SK-N-SH (cell line): ENCODE measurements at regions of chr10 and their contacts with region 1.

Region 1: GRCh38 chr10:80662577-80663261 is 125.0 kb downstream of the SH2D4B start:
- DNase-seq: peak; percentile 77
- H3K4me3 ChIP-seq: peak overlapping the region; percentile 24 to 46; a peak in 3 of 4 replicates
- H3K27ac ChIP-seq: no peak overlapping the region
- H3K4me1 ChIP-seq: peaks cover 0 to 2% of the 10 kb centered on the region in 2 experiments; a peak in 1 of 4 replicates
- H3K27me3 ChIP-seq: no peaks in the 10 kb centered on the region
- CTCF ChIP-seq: peak; percentile 88
- EP300 ChIP-seq: no peak
- RAD21 ChIP-seq: peak; percentile 70

Region 2: GRCh38 chr10:80382989-80383388 is 279.7 kb before region 1 on chr10:
- CTCF ChIA-PET with region 1: interaction called, 12 read pairs
- POLR2A ChIA-PET with region 1: no interaction called
- DNase-seq: peak; percentile 68
- H3K4me3 ChIP-seq: peak overlapping the region in 1 of 2 experiments; percentile 7; a peak in 1 of 4 replicates
- H3K27ac ChIP-seq: no peak overlapping the region
- H3K4me1 ChIP-seq: peaks cover 0 to 3% of the 10 kb centered on the region in 2 experiments; a peak in 1 of 4 replicates
- H3K27me3 ChIP-seq: no peaks in the 10 kb centered on the region; the same call in 1 of the 2 replicates
- CTCF ChIP-seq: peak; percentile 81
- EP300 ChIP-seq: no peak
- RAD21 ChIP-seq: peak; percentile 85

Region 3: DNA sequence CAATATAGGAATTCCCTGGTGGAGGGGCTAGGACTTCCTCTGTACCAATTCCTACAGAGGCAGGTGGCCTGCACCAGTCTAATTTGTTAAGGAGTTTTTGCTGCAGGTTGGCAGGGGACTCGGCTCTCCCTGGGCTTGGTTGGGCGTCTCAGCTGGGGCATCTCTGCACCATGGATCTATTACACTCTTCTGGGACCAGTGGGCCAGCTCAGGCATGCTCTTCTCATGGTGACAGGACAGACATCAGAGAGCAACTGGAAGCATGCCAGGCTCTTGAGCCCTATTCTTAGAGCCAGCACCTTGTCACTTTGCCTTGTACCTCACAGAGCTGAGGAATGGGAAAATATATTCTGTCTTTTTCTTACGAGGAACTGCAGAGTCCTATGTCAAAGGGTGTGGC is 50.5 kb before region 1 on chr10:
- CTCF ChIA-PET with region 1: interaction called, 15 read pairs
- POLR2A ChIA-PET with region 1: no interaction called
- DNase-seq: no peak
- H3K4me3 ChIP-seq: no peak overlapping the region
- H3K27ac ChIP-seq: no peak overlapping the region
- H3K4me1 ChIP-seq: no peaks in the 10 kb centered on the region
- H3K27me3 ChIP-seq: no peaks in the 10 kb centered on the region
- CTCF ChIP-seq: no peak
- EP300 ChIP-seq: no peak
- RAD21 ChIP-seq: no peak

Region 4: GRCh38 chr10:80649183-80649582 is 13.5 kb before region 1 on chr10:
- CTCF ChIA-PET with region 1: interaction called, 105 read pairs
- POLR2A ChIA-PET with region 1: no interaction called
- DNase-seq: no peak
- H3K4me3 ChIP-seq: no peak overlapping the region
- H3K27ac ChIP-seq: no peak overlapping the region
- H3K4me1 ChIP-seq: peaks cover 0 to 15% of the 10 kb centered on the region in 2 experiments; a peak in 2 of 4 replicates
- H3K27me3 ChIP-seq: no peaks in the 10 kb centered on the region
- CTCF ChIP-seq: no peak
- EP300 ChIP-seq: no peak
- RAD21 ChIP-seq: no peak

Region 5: GRCh38 chr10:80861882-80862281 is 199.2 kb after region 1 on chr10:
- CTCF ChIA-PET with region 1: interaction called, 10 read pairs
- POLR2A ChIA-PET with region 1: no interaction called
- DNase-seq: no peak
- H3K4me3 ChIP-seq: no peak overlapping the region
- H3K27ac ChIP-seq: no peak overlapping the region
- H3K4me1 ChIP-seq: no peaks in the 10 kb centered on the region
- H3K27me3 ChIP-seq: no peaks in the 10 kb centered on the region
- CTCF ChIP-seq: no peak
- EP300 ChIP-seq: no peak
- RAD21 ChIP-seq: peak; percentile 40

Region 6: DNA sequence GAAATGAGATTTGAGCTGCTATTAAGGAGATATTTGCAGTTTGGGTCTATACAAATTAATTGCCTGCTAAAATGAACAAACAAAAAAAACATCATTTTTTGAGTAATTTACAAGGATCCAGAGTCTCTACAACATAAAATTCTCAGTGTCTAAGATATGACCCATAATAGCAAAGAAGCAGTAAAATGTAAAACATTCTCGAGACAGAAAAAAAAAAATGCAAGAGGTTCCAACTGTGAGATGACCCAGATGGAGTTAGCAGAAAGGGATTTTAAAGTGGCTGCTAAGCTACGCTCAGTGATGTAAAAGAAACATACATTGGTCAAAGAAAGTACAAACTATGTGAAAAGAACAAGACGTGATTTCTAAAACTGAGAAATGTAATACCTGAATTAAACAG is 346.0 kb after region 1 on chr10:
- CTCF ChIA-PET with region 1: interaction called, 12 read pairs
- POLR2A ChIA-PET with region 1: no interaction called
- DNase-seq: no peak
- H3K4me3 ChIP-seq: no peak overlapping the region
- H3K27ac ChIP-seq: no peak overlapping the region
- H3K4me1 ChIP-seq: no peaks in the 10 kb centered on the region
- H3K27me3 ChIP-seq: no peaks in the 10 kb centered on the region
- CTCF ChIP-seq: no peak
- EP300 ChIP-seq: no peak
- RAD21 ChIP-seq: no peak